ENCODE measurements at regions of chr17 and their contacts with region 1.

Region 1: DNA sequence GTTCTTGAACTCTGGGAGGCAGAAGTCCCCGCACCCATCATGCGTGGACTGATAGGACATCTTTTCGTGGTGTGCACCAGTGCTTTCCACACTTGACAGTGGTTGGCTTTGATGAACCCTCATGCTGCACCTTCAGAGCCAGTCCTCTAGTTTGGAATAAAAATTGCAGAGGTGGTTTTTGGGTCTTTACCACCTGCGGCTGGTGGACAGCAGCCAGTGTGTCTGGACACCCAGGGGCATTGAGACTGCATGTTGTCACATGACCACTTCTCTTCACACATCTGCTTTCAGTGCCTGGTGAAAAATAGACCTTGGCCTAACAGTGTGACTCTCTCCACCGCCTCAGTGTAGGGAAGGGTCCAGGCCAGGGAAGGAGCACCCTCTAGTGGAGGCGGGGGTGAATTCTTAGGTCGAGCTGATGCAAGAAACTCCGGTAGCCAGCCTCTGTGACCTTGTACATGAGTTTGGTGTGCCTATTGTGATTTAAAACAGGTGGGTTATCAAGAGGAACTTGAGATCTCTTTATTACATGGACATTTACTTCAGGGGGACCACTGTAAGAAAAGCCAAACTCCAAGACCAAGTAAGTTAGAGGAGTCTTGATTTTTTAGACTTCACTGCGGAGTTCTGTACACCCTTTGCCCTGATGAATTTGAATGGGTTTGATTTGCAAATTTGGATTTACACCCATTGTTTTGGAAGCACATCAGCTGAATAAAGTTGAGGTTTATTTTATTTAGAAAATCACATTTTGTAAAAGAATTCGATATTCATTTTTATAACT is 17.9 kb downstream of the GOSR2 start:
- DNase-seq: peak; percentile 88
- ATAC-seq: peak; percentile 80
- H3K4me3 Mint-ChIP-seq: no peak overlapping the region
- H3K27ac Mint-ChIP-seq: peak overlapping the region; percentile 80; the same call in 1 of the 2 replicates
- H3K4me1 Mint-ChIP-seq: peaks cover 37% of the 10 kb centered on the region
- H3K27me3 Mint-ChIP-seq: no peaks in the 10 kb centered on the region
- CTCF ChIP-seq: peak; percentile 64

Region 2: DNA sequence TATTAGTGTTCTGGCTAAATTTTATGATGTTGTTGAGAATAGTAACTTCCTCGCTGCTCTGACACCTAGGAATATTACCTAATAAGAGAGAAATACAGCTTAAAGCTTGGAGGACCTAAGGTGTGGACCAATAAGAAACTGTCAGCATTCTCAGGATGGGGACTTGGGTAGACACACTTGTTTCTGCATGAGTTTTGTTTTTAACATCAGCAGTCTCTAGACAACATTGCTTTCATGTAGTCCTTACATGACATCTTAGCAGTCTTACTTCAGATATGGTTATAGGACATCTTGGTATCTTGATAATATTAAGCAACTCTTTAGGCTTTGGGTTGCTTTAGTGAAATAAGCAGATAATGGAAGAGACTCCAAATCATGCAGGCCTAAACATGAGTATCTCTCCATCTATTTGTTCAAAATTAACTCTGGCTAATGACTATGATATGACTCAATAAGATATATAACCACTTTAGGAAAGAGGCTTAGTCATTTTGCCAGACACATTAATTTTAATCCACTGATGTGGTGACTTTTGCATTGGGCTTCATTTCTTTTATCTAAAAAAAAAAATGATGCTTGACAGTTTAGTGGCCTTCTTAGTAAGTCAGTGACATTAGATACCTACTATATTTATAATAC is 206.9 kb before region 1 on chr17:
- CTCF ChIA-PET with region 1: no interaction called
- POLR2A ChIA-PET with region 1: no interaction called
- DNase-seq: no peak
- ATAC-seq: no peak
- H3K4me3 Mint-ChIP-seq: no peak overlapping the region
- H3K27ac Mint-ChIP-seq: no peak overlapping the region
- H3K4me1 Mint-ChIP-seq: peaks cover 38% of the 10 kb centered on the region
- H3K27me3 Mint-ChIP-seq: no peaks in the 10 kb centered on the region
- CTCF ChIP-seq: no peak

Region 3: GRCh38 chr17:46832945-46833839 is 107.6 kb before region 1 on chr17:
- CTCF ChIA-PET with region 1: interaction called, 12 read pairs
- POLR2A ChIA-PET with region 1: no interaction called
- DNase-seq: no peak
- ATAC-seq: no peak
- H3K4me3 Mint-ChIP-seq: no peak overlapping the region
- H3K27ac Mint-ChIP-seq: no peak overlapping the region
- H3K4me1 Mint-ChIP-seq: peaks cover 40% of the 10 kb centered on the region
- H3K27me3 Mint-ChIP-seq: peaks cover 34% of the 10 kb centered on the region
- CTCF ChIP-seq: no peak

Region 4: DNA sequence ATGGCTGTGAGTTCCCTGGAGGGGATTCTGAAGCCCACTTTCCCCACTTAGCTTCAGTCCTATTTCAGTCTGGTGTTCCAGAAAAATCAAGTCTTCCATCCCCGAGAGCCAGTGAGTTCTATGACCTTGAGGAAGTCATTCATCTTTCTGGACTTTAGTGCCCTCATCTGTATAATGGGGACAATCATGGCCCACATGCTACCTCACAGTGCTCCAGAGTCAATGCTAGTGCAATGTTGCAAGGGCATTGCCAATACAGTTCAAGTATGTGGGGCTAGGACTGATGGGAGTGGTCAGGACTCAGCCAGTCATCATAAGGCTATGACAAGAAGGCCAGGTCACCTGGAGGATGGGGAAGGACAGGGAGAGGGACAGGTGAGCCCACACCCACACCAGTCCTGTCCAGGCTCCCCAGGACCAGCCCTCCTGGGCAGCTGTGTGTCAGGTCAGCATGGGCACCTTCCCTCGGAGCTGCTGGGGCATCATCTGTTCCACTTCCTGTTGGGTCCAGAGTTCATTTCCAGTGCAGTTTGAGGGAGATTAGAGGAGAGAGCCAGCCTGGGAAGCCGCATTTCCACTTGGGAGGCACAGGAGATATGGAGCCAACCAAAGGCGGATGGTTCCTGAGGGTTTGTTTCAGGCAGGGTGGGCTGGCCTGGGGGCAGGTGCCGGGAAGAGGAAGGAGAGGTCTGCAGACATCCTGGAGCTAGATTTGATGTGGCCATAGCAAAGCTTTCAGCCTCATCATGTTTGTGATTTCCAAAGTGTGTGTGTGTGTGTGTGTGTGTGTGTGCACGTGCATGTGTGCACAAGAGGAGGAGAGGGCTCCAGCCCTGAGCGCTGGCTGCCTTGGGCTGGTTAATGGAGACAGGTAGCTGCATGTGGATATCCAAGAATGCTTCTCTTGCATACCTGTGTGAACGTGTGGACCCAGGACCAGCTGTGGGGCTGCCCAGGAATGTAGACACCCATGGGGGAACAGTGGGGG is 93.3 kb before region 1 on chr17:
- CTCF ChIA-PET with region 1: interaction called, 24 read pairs
- POLR2A ChIA-PET with region 1: no interaction called
- DNase-seq: no peak
- ATAC-seq: no peak
- H3K4me3 Mint-ChIP-seq: no peak overlapping the region
- H3K27ac Mint-ChIP-seq: no peak overlapping the region
- H3K4me1 Mint-ChIP-seq: peaks cover 5% of the 10 kb centered on the region
- H3K27me3 Mint-ChIP-seq: peaks cover 64% of the 10 kb centered on the region
- CTCF ChIP-seq: no peak

Region 5: DNA sequence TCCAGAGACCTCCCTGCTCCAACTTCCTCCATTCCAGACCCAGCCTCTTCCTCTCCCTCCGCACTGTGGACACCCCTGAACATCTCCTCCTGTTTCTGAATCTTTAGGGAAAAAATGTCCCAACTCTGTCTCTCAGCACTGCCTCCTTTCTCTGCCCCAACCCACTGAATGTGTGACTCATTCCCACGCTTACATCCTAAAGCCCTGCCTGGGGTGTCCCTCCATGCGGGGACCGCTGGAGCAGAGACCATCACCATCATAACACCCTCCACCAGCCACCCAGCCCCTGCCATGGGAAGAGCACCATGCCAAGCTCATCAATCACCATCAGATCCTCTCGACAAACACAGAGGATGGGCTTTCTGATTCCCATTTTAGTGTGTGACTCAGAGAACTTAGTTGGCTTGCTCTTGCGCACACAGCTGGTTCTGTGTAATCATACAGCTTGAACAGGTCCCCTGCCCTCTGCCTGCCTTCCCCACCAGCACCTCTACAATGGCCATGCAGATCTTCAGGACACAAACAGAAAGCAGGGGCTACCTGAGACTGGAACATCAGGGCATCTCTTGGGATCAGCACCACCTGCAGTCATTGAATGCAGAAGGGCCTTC is 27.5 kb after region 1 on chr17:
- CTCF ChIA-PET with region 1: interaction called, 118 read pairs
- POLR2A ChIA-PET with region 1: no interaction called
- DNase-seq: no peak
- ATAC-seq: no peak
- H3K4me3 Mint-ChIP-seq: no peak overlapping the region
- H3K27ac Mint-ChIP-seq: no peak overlapping the region
- H3K4me1 Mint-ChIP-seq: no peaks in the 10 kb centered on the region
- H3K27me3 Mint-ChIP-seq: peaks cover 3% of the 10 kb centered on the region; the same call in 1 of the 2 replicates
- CTCF ChIP-seq: no peak

Region 6: GRCh38 chr17:46995841-46996571 is 55.2 kb after region 1 on chr17:
- CTCF ChIA-PET with region 1: interaction called, 86 read pairs
- POLR2A ChIA-PET with region 1: no interaction called
- DNase-seq: no peak
- ATAC-seq: no peak
- H3K4me3 Mint-ChIP-seq: no peak overlapping the region
- H3K27ac Mint-ChIP-seq: no peak overlapping the region
- H3K4me1 Mint-ChIP-seq: no peaks in the 10 kb centered on the region
- H3K27me3 Mint-ChIP-seq: no peaks in the 10 kb centered on the region
- CTCF ChIP-seq: no peak

Region 7: DNA sequence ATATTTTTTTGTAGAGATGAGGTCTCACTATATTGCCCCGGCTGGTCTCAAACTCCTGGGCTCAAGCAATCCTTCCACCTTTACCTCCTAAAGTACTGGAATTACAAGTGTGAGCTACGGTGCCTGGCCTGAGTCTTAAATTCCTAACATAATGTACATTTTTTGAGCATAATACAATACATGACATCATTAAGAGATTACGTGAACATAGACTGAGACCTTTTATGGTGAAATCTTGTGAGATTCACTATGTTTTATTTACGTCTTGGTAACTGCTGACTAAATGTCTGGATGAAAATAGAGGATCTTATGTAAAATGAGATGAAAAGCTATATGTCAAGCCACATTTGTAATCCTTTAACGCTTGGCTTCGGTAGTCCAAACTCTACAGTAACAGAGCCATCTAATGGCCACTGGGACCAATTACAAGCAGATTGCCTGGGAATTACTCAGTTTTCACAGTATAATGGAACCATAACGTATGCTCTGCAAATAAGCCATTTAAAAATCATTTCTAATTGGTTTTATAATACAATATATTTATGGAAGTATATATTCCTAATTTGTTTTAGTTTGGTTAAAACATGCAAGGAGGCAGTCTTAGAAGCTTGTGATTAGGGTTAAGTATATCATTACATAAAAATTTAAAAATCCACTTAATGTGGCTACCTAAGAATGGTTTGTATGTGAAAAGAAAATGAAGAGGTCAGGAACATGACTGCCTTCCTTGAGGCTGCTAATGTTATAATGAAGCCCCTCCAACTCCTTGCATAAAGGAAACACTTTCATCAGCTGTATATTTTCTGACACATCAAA is 374.8 kb after region 1 on chr17:
- CTCF ChIA-PET with region 1: interaction called, 10 read pairs
- POLR2A ChIA-PET with region 1: no interaction called
- DNase-seq: no peak
- ATAC-seq: peak; percentile 81
- H3K4me3 Mint-ChIP-seq: no peak overlapping the region
- H3K27ac Mint-ChIP-seq: no peak overlapping the region
- H3K4me1 Mint-ChIP-seq: 0 out of 2 replicates have a peak, but pooled peaks cover 2% of the 10 kb centered on the region
- H3K27me3 Mint-ChIP-seq: peaks cover 1% of the 10 kb centered on the region; the same call in 1 of the 2 replicates
- CTCF ChIP-seq: peak; percentile 57; the same call in 1 of the 2 replicates